Mammary epithelial cell (primary cell): ENCODE measurements at regions of chr7 and their contacts with region 1.

Region 1: DNA sequence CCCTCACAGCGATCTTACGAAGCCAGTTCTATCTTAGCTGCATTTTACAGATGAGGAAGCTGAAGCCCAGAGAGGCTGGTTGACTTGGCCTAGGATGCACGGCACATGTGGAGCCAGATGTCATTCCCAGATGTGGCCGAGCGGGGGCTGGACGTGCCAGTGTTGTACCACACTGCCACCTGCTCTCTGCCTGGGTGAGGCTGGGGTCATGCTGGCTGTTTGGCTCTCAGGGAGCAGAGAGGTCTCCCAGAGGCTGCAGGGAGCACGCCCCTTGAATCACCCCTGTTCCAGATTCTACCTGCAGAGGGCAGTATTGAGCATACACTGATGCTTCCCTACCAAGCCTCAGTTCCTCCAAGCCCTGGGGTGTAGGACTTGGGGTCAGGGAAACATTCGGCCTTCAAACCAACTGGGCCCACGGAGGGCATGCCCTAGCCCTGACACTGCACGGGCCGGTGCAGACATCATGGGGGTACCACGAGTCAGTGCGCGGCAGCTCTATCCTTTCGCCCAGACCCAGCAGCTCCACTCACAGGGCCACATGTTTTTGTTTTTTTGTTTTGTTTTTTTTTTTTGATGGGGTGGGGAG is 3.8 kb upstream of the GTF2IRD1 start:
- DNase-seq: no peak
- H3K4me3 ChIP-seq: no peak overlapping the region
- H3K27ac ChIP-seq: no peak overlapping the region
- H3K4me1 ChIP-seq: peaks cover 18% of the 10 kb centered on the region
- H3K27me3 ChIP-seq: no peaks in the 10 kb centered on the region
- CTCF ChIP-seq: peak; percentile 81 to 84

Region 2: DNA sequence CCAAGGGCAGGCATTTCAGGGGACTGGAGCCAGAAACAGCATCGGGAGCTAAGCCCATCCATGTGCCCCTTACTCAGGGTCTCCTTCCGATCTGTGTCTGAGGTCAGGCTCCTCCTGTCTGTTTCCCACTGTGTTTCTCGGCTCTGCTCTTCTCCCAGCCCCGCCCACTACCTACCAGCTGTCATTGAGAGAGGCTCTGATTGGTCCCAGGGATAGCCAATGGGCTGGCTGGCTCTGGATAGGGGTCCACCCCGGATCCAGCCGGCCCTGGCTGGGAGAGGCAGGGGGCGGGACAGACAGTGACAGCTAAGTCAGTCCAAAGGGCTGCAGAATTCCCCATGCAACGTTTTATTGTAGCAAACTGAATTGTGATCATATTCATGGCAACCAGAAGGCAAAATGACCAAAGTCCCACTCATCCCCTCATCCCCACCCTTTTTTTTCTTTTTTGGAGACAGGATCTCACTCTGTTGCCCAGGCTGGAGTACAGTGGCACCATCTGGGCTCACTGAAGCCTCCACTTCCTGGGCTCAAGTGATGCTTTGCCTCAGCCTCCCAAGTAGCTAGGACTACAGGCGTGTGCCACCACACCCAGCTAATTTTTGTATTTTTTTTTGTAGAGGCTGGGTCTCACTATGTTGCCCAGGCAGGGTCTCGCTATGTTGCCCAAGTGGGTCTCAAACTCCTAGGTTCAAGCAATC is 84.4 kb before region 1 on chr7:
- CTCF ChIA-PET with region 1: no interaction called
- dilution Hi-C with region 1: no loop called
- in situ Hi-C with region 1: no loop called
- intact Hi-C with region 1: no loop called
- DNase-seq: no peak
- H3K4me3 ChIP-seq: no peak overlapping the region
- H3K27ac ChIP-seq: no peak overlapping the region
- H3K4me1 ChIP-seq: no peaks in the 10 kb centered on the region
- H3K27me3 ChIP-seq: no peaks in the 10 kb centered on the region
- CTCF ChIP-seq: no peak

Region 3: DNA sequence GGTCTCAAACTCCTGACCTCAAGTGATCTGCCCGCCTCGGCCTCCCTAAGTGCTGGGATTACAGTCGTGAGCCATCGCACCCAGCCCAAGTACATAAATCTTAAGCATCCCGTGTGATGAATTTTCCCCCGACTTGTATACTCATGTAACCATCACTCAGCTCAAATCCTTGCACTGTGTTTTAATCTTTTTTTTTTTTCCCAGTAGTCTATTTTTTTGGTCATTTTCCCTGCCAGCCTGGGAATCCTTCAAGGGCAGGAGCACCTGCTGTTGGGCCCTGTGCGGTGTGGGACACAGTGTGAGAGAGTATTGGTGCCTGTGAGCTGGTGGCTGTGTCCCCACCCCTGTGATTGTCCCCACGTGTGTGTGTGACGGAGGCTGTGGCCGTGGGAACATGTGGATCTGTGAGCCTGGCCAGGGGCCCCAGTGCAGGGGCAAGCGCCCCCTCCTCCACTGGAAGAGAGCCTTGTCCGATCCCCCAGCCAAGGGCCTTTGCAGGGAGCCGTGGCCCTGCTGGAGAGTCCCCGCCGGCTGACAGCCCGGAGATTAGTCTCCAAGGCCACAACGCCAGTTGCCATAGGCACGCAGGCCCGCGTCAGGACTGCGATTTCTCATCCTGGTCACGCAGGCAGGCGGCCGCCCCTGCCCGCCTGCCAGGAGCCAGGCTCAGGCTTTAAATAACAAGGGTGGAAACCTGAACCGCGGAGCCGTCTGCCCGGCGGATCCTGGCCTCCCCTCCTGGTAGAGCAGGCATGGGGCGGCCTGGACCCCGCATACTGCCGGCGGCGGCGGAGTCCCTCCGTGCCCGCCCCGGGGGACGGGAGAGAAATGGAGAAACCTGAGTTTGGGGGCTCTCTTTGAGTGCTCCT is 30.3 kb after region 1 on chr7:
- CTCF ChIA-PET with region 1: no interaction called
- dilution Hi-C with region 1: loop called (anchors 5 kb)
- in situ Hi-C with region 1: no loop called
- intact Hi-C with region 1: loop called (anchors 2 kb)
- DNase-seq: peak; percentile 73
- H3K4me3 ChIP-seq: no peak overlapping the region
- H3K27ac ChIP-seq: no peak overlapping the region
- H3K4me1 ChIP-seq: peaks cover 81% of the 10 kb centered on the region
- H3K27me3 ChIP-seq: no peaks in the 10 kb centered on the region
- CTCF ChIP-seq: no peak

Region 4: GRCh38 chr7:74525880-74526279 is 76.0 kb after region 1 on chr7:
- CTCF ChIA-PET with region 1: no interaction called
- dilution Hi-C with region 1: loop called (anchors 5 kb)
- in situ Hi-C with region 1: loop called in 1 of 2 experiments (anchors 10 kb)
- intact Hi-C with region 1: no loop called
- DNase-seq: peak; percentile 93
- H3K4me3 ChIP-seq: no peak overlapping the region
- H3K27ac ChIP-seq: no peak overlapping the region
- H3K4me1 ChIP-seq: peaks cover 17% of the 10 kb centered on the region
- H3K27me3 ChIP-seq: no peaks in the 10 kb centered on the region
- CTCF ChIP-seq: no peak

Region 5: GRCh38 chr7:74544706-74545469 is 95.0 kb after region 1 on chr7:
- CTCF ChIA-PET with region 1: no interaction called
- dilution Hi-C with region 1: loop called (anchors 5 kb)
- in situ Hi-C with region 1: loop called in 1 of 2 experiments (anchors 25 kb)
- intact Hi-C with region 1: loop called (anchors 1 kb)
- DNase-seq: peak; percentile 23
- H3K4me3 ChIP-seq: no peak overlapping the region
- H3K27ac ChIP-seq: no peak overlapping the region
- H3K4me1 ChIP-seq: peaks cover 9% of the 10 kb centered on the region
- H3K27me3 ChIP-seq: no peaks in the 10 kb centered on the region
- CTCF ChIP-seq: peak; percentile 53 to 54

Region 6: GRCh38 chr7:74569501-74570075 is 119.7 kb after region 1 on chr7:
- CTCF ChIA-PET with region 1: no interaction called
- dilution Hi-C with region 1: no loop called
- in situ Hi-C with region 1: loop called in 1 of 2 experiments (anchors 25 kb)
- intact Hi-C with region 1: loop called (anchors 2 kb)
- DNase-seq: no peak
- H3K4me3 ChIP-seq: no peak overlapping the region
- H3K27ac ChIP-seq: no peak overlapping the region
- H3K4me1 ChIP-seq: peaks cover under 1% of the 10 kb centered on the region
- H3K27me3 ChIP-seq: no peaks in the 10 kb centered on the region
- CTCF ChIP-seq: no peak

Region 7: DNA sequence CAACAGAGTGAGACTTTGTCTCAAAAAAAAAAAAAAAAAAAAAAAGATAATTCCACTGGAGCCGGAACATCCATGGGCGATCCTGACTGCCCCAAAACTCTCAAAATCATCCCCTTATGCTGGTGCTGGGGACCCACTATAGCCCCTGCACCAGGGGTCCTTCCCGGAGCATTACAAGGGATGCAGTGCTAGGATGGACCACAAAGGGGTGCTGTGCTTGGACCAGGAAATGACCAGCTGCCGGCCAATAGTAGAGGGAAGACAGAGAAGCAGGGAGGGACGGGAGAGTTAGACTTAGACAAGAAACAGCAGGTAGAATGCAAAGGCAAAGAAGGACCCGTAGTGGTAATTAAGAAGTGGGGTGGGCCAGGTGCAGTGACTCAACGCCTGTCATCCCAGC is 583.1 kb after region 1 on chr7:
- CTCF ChIA-PET with region 1: no interaction called
- dilution Hi-C with region 1: loop called (anchors 25 kb)
- in situ Hi-C with region 1: no loop called
- intact Hi-C with region 1: no loop called
- DNase-seq: no peak
- H3K4me3 ChIP-seq: no peak overlapping the region
- H3K27ac ChIP-seq: no peak overlapping the region
- H3K4me1 ChIP-seq: no peaks in the 10 kb centered on the region
- H3K27me3 ChIP-seq: no peaks in the 10 kb centered on the region
- CTCF ChIP-seq: no peak